ENCODE measurements at regions of chr1 and their contacts with region 1.

Region 1: DNA sequence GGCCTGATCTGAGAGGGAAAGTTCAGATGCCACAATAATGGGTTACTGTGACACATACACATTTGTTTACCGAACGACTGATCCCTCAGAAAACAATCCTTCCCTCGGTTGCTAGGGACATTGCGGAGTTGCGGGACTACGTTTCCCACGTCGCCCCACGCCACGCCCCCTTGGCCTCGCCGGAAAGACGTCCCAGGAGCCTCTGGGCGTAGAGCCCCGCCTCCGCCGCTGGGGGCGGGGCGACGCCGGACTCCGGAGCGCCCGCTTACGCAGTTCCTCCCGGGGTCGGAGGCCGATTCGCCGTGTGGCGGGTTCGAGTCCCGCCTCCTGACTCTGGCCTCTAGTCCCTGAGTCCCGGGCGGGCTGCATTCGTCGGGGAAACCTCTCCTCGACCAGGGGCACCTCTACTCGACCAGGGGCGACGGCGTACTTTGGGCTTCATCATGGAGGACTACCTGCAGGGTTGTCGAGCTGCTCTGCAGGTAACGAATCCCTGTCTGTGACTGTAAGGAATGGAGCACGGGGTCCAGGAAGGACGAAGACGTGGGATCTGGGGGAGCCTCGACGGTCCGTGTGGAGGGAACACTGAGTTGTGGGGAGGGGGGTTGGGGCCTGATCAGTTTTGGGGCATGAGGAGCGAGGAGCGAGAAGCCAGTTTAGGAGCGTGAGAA is at the start of gene PRUNE1:
- DNase-seq: peak; percentile 97
- H3K4me3 Mint-ChIP-seq: peak within 1 kb of the TSS; percentile 94
- H3K27ac Mint-ChIP-seq: peak within 1 kb of the TSS; percentile 99
- H3K4me1 Mint-ChIP-seq: peaks cover 35% of the 10 kb centered on the region
- H3K27me3 Mint-ChIP-seq: no peaks in the 10 kb centered on the region
- CTCF ChIP-seq: no peak
- total RNA-seq, gene PRUNE1: 17.6 and 24.1 TPM in 2 replicates

Region 2: GRCh38 chr1:150841626-150842025 is 166.7 kb before region 1 on chr1:
- CTCF ChIA-PET with region 1: no interaction called
- POLR2A ChIA-PET with region 1: no interaction called
- intact Hi-C with region 1: no loop called
- DNase-seq: no peak
- H3K4me3 Mint-ChIP-seq: no peak overlapping the region
- H3K27ac Mint-ChIP-seq: no peak overlapping the region
- H3K4me1 Mint-ChIP-seq: no peaks in the 10 kb centered on the region
- H3K27me3 Mint-ChIP-seq: no peaks in the 10 kb centered on the region
- CTCF ChIP-seq: no peak

Region 3: DNA sequence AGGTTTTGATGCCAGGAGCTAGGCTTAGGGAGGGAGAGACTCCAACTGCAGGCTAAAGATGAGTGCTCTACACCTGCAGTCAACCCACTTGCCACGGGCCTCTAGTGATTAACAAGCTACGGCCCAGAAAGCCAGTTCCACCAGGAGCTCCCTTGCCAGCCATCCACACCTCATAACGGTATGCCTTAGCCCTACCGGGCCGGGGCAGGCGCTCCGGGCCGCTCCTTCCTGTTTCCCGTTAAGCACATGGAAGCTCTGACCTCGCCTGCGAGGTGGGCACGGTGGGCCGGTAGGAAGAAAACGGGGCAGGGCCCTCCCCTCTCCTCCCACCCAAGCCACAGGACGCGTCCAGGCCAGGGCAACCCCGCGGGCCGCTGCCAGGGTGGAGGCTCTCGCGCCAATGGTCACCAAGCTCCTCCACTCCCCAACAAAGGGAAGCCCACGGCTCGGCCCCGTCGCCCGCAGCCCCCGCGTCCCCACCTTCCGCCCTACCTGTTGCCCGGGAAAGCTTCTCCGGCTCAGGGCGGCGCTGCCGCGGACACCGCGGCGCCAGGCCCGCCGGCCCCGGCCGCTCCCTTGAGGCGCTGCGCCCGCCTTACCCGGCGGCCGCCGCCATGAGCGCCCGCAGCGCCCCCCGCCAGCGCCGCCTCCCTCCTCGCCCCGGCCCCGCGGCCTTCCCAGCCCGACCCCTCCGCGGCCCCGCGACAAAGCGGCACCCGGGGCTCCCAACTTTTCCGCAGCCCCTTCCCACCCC is 34.3 kb before region 1 on chr1:
- CTCF ChIA-PET with region 1: interaction called, 85 read pairs
- POLR2A ChIA-PET with region 1: interaction called, 43 read pairs
- intact Hi-C with region 1: loop called (anchors 1 kb)
- DNase-seq: peak; percentile 48
- H3K4me3 Mint-ChIP-seq: peak overlapping the region; percentile 85
- H3K27ac Mint-ChIP-seq: peak overlapping the region; percentile 96
- H3K4me1 Mint-ChIP-seq: peaks cover 43% of the 10 kb centered on the region
- H3K27me3 Mint-ChIP-seq: no peaks in the 10 kb centered on the region
- CTCF ChIP-seq: no peak

Region 4: GRCh38 chr1:150987924-150988323 is 20.4 kb before region 1 on chr1:
- CTCF ChIA-PET with region 1: interaction called, 113 read pairs
- POLR2A ChIA-PET with region 1: interaction called, 3 read pairs
- intact Hi-C with region 1: no loop called
- DNase-seq: no peak
- H3K4me3 Mint-ChIP-seq: no peak overlapping the region
- H3K27ac Mint-ChIP-seq: no peak overlapping the region
- H3K4me1 Mint-ChIP-seq: peaks cover 8% of the 10 kb centered on the region
- H3K27me3 Mint-ChIP-seq: no peaks in the 10 kb centered on the region
- CTCF ChIP-seq: no peak

Region 5: DNA sequence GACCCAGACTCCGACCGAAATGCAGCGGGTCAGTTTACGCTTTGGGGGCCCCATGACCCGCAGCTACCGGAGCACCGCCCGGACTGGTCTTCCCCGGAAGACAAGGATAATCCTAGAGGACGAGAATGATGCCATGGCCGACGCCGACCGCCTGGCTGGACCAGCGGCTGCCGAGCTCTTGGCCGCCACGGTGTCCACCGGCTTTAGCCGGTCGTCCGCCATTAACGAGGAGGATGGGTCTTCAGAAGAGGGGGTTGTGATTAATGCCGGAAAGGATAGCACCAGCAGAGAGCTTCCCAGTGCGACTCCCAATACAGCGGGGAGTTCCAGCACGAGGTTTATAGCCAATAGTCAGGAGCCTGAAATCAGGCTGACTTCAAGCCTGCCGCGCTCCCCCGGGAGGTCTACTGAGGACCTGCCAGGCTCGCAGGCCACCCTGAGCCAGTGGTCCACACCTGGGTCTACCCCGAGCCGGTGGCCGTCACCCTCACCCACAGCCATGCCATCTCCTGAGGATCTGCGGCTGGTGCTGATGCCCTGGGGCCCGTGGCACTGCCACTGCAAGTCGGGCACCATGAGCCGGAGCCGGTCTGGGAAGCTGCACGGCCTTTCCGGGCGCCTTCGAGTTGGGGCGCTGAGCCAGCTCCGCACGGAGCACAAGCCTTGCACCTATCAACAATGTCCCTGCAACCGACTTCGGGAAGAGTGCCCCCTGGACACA is 39.8 kb after region 1 on chr1:
- CTCF ChIA-PET with region 1: interaction called, 3 read pairs
- POLR2A ChIA-PET with region 1: interaction called, 17 read pairs
- intact Hi-C with region 1: no loop called
- DNase-seq: peak; percentile 79
- H3K4me3 Mint-ChIP-seq: peak overlapping the region; percentile 85
- H3K27ac Mint-ChIP-seq: peak overlapping the region; percentile 79
- H3K4me1 Mint-ChIP-seq: peaks cover 21% of the 10 kb centered on the region
- H3K27me3 Mint-ChIP-seq: no peaks in the 10 kb centered on the region
- CTCF ChIP-seq: peak; percentile 36

Region 6: DNA sequence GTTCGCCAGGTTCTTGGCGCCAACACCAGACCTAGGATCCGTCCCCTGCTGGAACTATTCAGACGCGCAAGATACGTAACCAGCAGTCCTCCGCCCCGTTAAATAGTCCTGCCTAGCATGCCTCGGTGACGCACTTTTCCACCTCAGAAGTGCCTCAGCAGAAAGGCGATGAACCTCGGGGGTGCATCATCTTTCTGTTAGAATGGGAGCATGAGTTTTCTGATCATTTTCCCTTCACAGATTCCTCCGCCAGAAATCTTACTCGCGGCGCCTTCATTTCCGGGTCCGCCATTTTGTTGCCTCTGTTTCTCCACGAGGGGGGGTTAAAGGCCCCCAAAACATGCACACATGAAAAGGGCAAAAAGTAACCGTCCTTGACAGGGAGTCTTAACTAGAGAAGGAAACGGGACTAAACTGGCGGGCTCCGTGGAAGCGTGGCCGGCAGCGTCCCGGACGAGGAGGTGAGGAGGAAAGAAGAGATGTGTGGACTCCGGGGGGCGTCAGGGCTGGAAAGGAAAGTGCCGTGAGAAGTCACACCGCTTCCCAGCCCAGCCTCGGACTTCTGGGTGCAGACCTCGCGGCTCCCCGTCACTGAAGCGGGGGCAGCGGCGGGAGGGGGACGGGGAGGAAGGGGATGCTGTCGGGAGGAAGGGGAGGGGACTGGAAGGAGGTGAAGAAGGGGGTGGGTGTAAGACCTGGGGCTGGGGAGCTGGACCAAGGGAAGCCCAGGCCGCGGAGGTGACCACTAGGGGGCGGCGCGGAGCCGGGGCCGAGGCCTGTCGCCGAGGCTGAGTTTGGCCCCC is 62.4 kb after region 1 on chr1 and contains the start of gene GABPB2:
- CTCF ChIA-PET with region 1: interaction called, 3 read pairs
- POLR2A ChIA-PET with region 1: interaction called, 20 read pairs
- intact Hi-C with region 1: no loop called
- DNase-seq: peak; percentile 98
- H3K4me3 Mint-ChIP-seq: peak within 1 kb of the TSS; percentile 100
- H3K27ac Mint-ChIP-seq: peak within 1 kb of the TSS; percentile 100
- H3K4me1 Mint-ChIP-seq: no peaks in the 10 kb centered on the region
- H3K27me3 Mint-ChIP-seq: no peaks in the 10 kb centered on the region
- CTCF ChIP-seq: peak; percentile 99
- total RNA-seq, gene GABPB2: 20.2 and 22.9 TPM in 2 replicates

Region 7: DNA sequence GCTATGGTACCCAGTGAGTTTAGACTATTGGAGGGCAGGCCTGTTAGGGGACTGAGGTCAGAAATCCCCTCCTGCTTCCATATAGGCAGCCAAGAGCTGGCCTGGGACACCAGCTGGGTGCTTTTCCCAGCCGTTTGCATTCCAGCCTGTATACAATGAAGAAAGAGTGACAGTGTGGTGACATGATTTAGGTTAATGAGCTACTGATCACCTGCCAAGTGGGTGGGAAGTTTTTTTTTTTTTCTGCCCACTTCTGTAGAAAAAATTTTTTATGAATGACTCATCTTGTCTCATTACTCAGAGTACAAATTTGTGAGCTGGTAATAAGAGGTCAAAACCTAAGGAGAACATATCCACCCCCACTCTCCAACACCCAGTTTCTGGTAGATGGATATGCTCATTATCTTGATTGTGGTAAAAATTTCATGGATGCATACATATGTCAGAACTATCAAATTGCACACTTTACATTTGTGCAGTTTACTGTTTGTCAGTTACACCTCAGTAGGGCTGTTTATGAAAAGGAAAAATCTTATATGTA is 486.5 kb after region 1 on chr1:
- CTCF ChIA-PET with region 1: no interaction called
- POLR2A ChIA-PET with region 1: no interaction called
- intact Hi-C with region 1: no loop called
- DNase-seq: peak; percentile 82
- H3K4me3 Mint-ChIP-seq: no peak overlapping the region
- H3K27ac Mint-ChIP-seq: no peak overlapping the region
- H3K4me1 Mint-ChIP-seq: peaks cover 14% of the 10 kb centered on the region
- H3K27me3 Mint-ChIP-seq: peaks cover 34% of the 10 kb centered on the region
- CTCF ChIP-seq: no peak